ENCODE measurements at regions of chr13 and their contacts with region 1.

Region 1: DNA sequence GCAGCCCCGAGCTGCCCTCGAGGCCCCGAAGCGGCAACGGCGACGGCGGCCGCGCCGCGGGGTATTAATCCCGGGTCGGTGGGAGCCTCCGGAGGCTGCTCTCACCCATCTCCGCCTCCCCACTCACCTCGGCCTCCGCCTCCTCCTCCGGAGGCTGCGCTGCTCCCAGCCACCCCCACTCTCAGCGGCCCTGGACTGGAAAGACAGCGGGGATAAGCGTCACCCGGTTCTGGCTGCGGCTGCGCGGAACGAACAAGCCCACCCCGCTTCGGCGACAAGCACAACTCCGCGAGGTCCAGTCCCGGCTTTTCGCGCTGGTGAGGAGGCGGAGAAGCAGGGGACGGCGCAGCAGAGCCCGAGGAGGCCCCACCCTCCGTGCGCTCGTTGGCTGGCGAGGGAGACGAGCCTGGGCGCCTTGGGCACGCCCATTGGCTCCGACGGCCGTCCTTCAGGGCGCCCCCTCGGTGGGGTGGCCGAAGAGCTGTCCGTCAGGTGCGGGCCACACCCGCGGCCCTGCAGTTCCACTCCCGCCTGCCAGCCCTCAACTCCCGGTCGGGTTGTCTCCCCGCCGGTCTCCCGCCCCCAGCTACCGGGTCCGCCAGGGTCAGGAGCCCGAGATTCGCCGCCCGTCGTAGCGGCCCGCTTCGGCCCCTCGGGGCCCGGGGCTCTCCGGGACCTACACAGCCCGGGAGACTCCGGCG is at the start of gene ZMYM5:
- DNase-seq: peak; percentile 99
- H3K4me3 ChIP-seq: peak within 1 kb of the TSS; percentile 79 to 97 (median 90)
- H3K27ac ChIP-seq: peak within 1 kb of the TSS; percentile 97 to 99 (median 99)
- H3K4me1 ChIP-seq: peaks cover 11 to 43% (median 38%) of the 10 kb centered on the region in 4 donors
- H3K27me3 ChIP-seq: no peaks in the 10 kb centered on the region
- CTCF ChIP-seq: no peak
- EP300 ChIP-seq: no peak
- POLR2A ChIP-seq: peak; percentile 55
- total RNA-seq, gene ZMYM5: 9.7 to 13.4 (median 11.9) TPM

Region 2: GRCh38 chr13:19633479-19634255 is 229.8 kb before region 1 on chr13 and contains the start of gene MPHOSPH8:
- intact Hi-C with region 1: loop called (anchors 10 kb)
- DNase-seq: peak; percentile 99
- H3K4me3 ChIP-seq: peak within 1 kb of the TSS; percentile 73 to 91 (median 84)
- H3K27ac ChIP-seq: peak within 1 kb of the TSS; percentile 92 to 96 (median 94)
- H3K4me1 ChIP-seq: peaks cover 33 to 40% (median 36%) of the 10 kb centered on the region in 4 donors
- H3K27me3 ChIP-seq: no peaks in the 10 kb centered on the region
- CTCF ChIP-seq: peak in 1 of 3 experiments; percentile 9
- EP300 ChIP-seq: no peak
- POLR2A ChIP-seq: peak; percentile 45
- total RNA-seq, gene MPHOSPH8: 34.1 to 40.3 (median 39.0) TPM

Region 3: DNA sequence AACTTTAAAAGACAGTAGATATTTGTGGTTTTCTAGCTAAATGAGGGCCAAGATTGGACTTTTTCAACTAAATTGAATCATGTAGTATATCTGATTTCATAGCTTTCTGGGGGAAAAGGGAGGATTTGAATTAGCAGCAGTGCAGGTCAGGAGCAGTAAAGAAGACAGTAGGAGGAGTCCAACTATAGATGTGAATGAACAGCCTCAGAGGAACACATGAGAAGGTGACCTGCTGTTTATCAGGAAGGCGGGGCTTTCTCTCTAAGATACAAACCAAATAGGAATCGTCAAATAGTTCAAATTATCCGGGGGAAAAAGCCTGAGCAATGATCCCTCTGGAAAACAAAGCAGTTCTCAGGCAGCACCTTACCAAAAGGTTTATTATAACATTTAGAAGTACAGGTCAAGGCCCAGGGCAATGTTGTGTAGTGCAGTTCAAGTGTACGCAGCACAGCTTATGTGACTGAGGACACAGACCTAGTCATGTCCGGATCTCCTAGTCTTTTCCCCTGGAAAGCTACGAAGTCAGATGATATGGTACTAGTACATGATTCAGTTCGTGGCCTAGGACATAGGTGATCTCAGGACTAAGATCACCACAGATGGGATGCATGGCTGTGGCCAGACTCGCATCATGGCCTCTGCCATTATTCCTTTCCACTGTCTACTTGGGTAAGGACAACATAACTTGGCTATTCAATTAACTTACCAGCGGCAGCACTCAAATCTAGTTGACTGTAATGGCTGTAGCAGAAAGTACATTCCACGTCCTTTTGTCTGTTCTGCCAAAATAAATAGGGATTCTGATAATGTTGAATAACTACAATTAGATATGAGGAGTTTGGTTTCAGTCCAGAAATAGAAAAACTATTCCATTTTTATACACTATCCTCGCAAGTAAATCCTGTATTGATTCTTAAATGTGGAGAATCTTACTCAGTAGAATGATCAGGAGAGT is 189.7 kb before region 1 on chr13:
- intact Hi-C with region 1: loop called (anchors 10 kb)
- DNase-seq: no peak
- H3K4me3 ChIP-seq: no peak overlapping the region
- H3K27ac ChIP-seq: no peak overlapping the region
- H3K4me1 ChIP-seq: no peaks in the 10 kb centered on the region
- H3K27me3 ChIP-seq: no peaks in the 10 kb centered on the region
- CTCF ChIP-seq: no peak
- EP300 ChIP-seq: no peak
- POLR2A ChIP-seq: no peak

Region 4: GRCh38 chr13:19713186-19713965 is 150.1 kb before region 1 on chr13:
- intact Hi-C with region 1: no loop called
- DNase-seq: no peak
- H3K4me3 ChIP-seq: no peak overlapping the region
- H3K27ac ChIP-seq: no peak overlapping the region
- H3K4me1 ChIP-seq: no peaks in the 10 kb centered on the region
- H3K27me3 ChIP-seq: no peaks in the 10 kb centered on the region
- CTCF ChIP-seq: no peak
- EP300 ChIP-seq: no peak
- POLR2A ChIP-seq: no peak

Region 5: DNA sequence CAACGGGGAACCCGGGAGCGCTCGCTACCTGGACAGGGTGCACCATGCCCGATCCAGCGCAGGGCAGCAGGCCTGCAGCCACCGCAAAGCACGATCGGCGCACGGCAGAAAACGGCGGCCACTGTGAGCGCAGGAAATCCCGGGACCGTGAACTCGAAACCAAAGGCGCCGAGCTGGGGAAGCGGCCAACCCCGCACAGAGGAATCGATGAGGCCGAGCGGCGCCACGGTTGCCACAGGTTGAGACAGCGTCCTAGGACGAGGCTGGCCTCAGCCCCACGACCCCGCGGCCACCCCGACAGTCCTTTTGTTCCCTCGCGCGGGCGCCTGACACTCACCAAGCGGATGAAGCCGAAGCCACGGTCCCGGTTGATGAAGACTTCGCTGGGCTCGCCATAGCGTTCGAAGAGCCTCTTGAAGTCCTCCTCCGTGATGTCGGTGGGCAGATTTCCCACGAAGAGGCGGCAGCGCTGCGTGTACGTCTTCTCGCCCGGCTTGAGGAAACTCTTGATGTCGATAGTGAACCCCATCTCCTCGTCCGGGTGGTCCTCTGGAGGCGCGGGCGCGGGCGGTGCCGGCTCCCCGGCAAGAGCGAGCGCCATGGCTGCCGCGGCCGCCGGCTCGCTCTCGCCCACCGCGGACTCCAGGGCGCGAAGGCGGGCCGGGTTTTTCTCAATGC is 81.3 kb before region 1 on chr13:
- intact Hi-C with region 1: loop called (anchors 2 kb)
- DNase-seq: peak; percentile 92
- H3K4me3 ChIP-seq: peak overlapping the region; percentile 87 to 98 (median 93)
- H3K27ac ChIP-seq: peak overlapping the region; percentile 93 to 98 (median 96)
- H3K4me1 ChIP-seq: peaks cover 6 to 16% (median 13%) of the 10 kb centered on the region in 4 donors
- H3K27me3 ChIP-seq: no peaks in the 10 kb centered on the region
- CTCF ChIP-seq: no peak
- EP300 ChIP-seq: no peak
- POLR2A ChIP-seq: no peak

Region 6: GRCh38 chr13:19845758-19846157 is 17.7 kb before region 1 on chr13:
- intact Hi-C with region 1: loop called (anchors 2 kb)
- DNase-seq: no peak
- H3K4me3 ChIP-seq: no peak overlapping the region
- H3K27ac ChIP-seq: peak overlapping the region; percentile 20 to 69 (median 46)
- H3K4me1 ChIP-seq: peaks cover 9 to 49% (median 46%) of the 10 kb centered on the region in 4 donors
- H3K27me3 ChIP-seq: no peaks in the 10 kb centered on the region
- CTCF ChIP-seq: no peak
- EP300 ChIP-seq: no peak
- POLR2A ChIP-seq: no peak

Region 7: GRCh38 chr13:19959831-19960652 is 96.6 kb after region 1 on chr13:
- intact Hi-C with region 1: loop called (anchors 2 kb)
- DNase-seq: no peak
- H3K4me3 ChIP-seq: peak overlapping the region; percentile 70 to 84 (median 73)
- H3K27ac ChIP-seq: peak overlapping the region; percentile 97 to 99 (median 98)
- H3K4me1 ChIP-seq: peaks cover 42 to 63% (median 60%) of the 10 kb centered on the region in 4 donors
- H3K27me3 ChIP-seq: no peaks in the 10 kb centered on the region
- CTCF ChIP-seq: peak; percentile 90 to 94 (median 91)
- EP300 ChIP-seq: no peak
- POLR2A ChIP-seq: no peak

Measured in esophagus muscularis mucosa (tissue), 4 donors.